PC-9 (cell line): ENCODE measurements at regions of chr3 and their contacts with region 1.

Region 1: GRCh38 chr3:114418724-114419543 is 125.1 kb downstream of the TIGIT start:
- DNase-seq: peak in 1 of 2 experiments; percentile 55
- H3K4me3 ChIP-seq: no peak overlapping the region
- H3K27ac ChIP-seq: no peak overlapping the region
- H3K4me1 ChIP-seq: no peaks in the 10 kb centered on the region
- H3K27me3 ChIP-seq: no peaks in the 10 kb centered on the region
- CTCF ChIP-seq: peak; percentile 85

Region 2: DNA sequence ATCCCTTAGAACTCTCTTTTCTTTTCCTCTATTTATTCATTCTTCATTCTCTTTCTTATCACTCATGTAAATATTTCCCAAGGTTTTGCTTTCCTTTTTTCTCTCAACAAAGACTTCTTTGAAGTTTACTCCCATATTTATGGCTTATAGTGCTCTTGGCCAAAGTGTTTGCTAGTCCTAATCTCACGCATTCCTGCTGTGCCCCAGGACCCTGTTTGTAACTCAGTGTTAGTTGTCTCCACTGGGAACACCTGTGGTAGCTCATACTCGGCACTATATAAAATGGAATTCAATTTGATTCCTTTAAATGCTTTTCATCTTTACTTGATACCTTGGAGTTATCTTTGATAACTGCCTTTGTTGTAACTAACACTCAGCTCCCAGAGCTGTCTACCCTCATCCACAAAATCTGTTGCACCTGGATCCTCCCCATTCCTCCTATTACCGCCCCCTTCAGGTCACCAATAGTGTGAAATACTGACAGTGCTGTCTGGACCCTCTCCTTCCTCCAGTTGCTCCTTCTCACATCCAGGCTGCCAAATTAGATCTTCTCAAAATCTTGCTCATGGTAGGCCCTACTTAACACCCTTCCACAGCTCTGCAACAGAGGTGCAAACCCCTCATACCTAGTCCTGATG is 48.3 kb before region 1 on chr3:
- CTCF ChIA-PET with region 1: no interaction called
- POLR2A ChIA-PET with region 1: interaction called, 14 read pairs
- intact Hi-C with region 1: no loop called
- DNase-seq: no peak
- H3K4me3 ChIP-seq: no peak overlapping the region
- H3K27ac ChIP-seq: no peak overlapping the region
- H3K4me1 ChIP-seq: no peaks in the 10 kb centered on the region
- H3K27me3 ChIP-seq: no peaks in the 10 kb centered on the region
- CTCF ChIP-seq: no peak; the same call in 1 of the 2 replicates

Region 3: GRCh38 chr3:114464548-114464947 is 45.6 kb after region 1 on chr3:
- CTCF ChIA-PET with region 1: no interaction called
- POLR2A ChIA-PET with region 1: no interaction called
- intact Hi-C with region 1: no loop called
- DNase-seq: no peak
- H3K4me3 ChIP-seq: no peak overlapping the region
- H3K27ac ChIP-seq: no peak overlapping the region
- H3K4me1 ChIP-seq: no peaks in the 10 kb centered on the region
- H3K27me3 ChIP-seq: no peaks in the 10 kb centered on the region
- CTCF ChIP-seq: no peak